ENCODE measurements at regions of chr12 and their contacts with region 1.

Region 1: GRCh38 chr12:104825408-104825807 is 132.7 kb downstream of the SLC41A2 start:
- DNase-seq: peak; percentile 25 to 69 (median 32)
- ATAC-seq: peak; percentile 82
- H3K4me3 ChIP-seq: no peak overlapping the region
- H3K27ac ChIP-seq: no peak overlapping the region
- H3K4me1 ChIP-seq: peaks cover 4 to 6% of the 10 kb centered on the region in 2 experiments; a peak in 4 of 5 replicates
- H3K27me3 ChIP-seq: no peaks in the 10 kb centered on the region
- CTCF ChIP-seq: peak; percentile 70 to 79 (median 77)
- EP300 ChIP-seq: no peak
- POLR2A ChIP-seq: no peak
- RAD21 ChIP-seq: peak; percentile 53 to 88

Region 2: DNA sequence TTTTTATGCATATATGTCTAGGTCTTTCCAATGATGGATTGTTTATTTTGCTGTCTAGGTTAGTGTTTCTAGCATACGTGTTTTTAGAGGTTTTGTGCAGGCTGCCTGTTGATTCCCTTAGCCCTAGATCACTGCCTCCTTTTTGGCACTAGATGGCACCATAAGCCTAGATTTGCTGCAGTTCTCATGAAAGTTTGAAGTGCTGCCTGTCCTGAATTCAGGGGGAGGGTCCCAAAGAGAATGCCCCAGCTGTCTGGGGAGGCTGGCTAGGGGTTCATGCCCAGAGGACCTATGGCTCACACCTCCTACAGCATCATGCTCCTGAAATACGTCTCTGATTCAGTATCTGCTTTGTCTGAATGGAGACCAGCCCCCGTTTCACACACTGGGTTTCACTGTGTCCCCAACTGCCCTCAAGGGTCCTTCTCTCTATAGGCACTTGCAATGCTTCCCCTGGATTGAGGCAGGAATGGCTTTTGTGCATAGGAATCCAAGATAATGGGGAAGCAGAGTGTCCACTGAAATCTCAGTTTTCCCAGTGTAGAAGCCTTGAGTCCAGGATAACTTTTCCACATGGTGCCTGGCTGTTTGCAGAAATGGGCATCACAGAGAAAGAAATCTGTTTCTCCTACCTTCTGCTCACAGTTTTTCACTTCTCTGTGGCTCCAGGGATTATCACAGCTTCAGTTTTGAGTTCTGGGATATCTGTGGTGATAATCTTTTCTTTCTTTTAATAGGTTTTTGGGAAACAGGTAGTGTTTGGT is 624.0 kb before region 1 on chr12:
- CTCF ChIA-PET with region 1: no interaction called
- POLR2A ChIA-PET with region 1: no interaction called
- in situ Hi-C with region 1: no loop called
- intact Hi-C with region 1: loop called (anchors 1 kb)
- DNase-seq: peak; percentile 61 to 71 (median 63)
- ATAC-seq: peak; percentile 91
- H3K4me3 ChIP-seq: no peak overlapping the region
- H3K27ac ChIP-seq: no peak overlapping the region
- H3K4me1 ChIP-seq: no peaks in the 10 kb centered on the region
- H3K27me3 ChIP-seq: peaks cover 0 to 8% of the 10 kb centered on the region in 2 experiments; a peak in 2 of 5 replicates
- CTCF ChIP-seq: peak; percentile 76 to 90 (median 88)
- EP300 ChIP-seq: no peak
- POLR2A ChIP-seq: no peak
- RAD21 ChIP-seq: peak; percentile 90 to 93

Region 3: GRCh38 chr12:104569346-104570173 is 255.8 kb before region 1 on chr12:
- CTCF ChIA-PET with region 1: no interaction called
- POLR2A ChIA-PET with region 1: no interaction called
- in situ Hi-C with region 1: no loop called
- intact Hi-C with region 1: loop called (anchors 10 kb)
- DNase-seq: no peak
- ATAC-seq: peak; percentile 42
- H3K4me3 ChIP-seq: no peak overlapping the region
- H3K27ac ChIP-seq: no peak overlapping the region
- H3K4me1 ChIP-seq: peaks cover 0 to 7% of the 10 kb centered on the region in 2 experiments; a peak in 3 of 5 replicates
- H3K27me3 ChIP-seq: no peaks in the 10 kb centered on the region
- CTCF ChIP-seq: no peak
- EP300 ChIP-seq: no peak
- POLR2A ChIP-seq: no peak
- RAD21 ChIP-seq: no peak

Region 4: GRCh38 chr12:104669736-104670341 is 155.6 kb before region 1 on chr12:
- CTCF ChIA-PET with region 1: interaction called, 3 read pairs
- POLR2A ChIA-PET with region 1: no interaction called
- in situ Hi-C with region 1: no loop called
- intact Hi-C with region 1: loop called (anchors 10 kb)
- DNase-seq: no peak
- ATAC-seq: no peak
- H3K4me3 ChIP-seq: no peak overlapping the region
- H3K27ac ChIP-seq: no peak overlapping the region
- H3K4me1 ChIP-seq: peaks cover 30 to 41% of the 10 kb centered on the region in 2 experiments; a peak in 4 of 5 replicates
- H3K27me3 ChIP-seq: no peaks in the 10 kb centered on the region
- CTCF ChIP-seq: no peak
- EP300 ChIP-seq: no peak
- POLR2A ChIP-seq: no peak
- RAD21 ChIP-seq: no peak

Region 5: DNA sequence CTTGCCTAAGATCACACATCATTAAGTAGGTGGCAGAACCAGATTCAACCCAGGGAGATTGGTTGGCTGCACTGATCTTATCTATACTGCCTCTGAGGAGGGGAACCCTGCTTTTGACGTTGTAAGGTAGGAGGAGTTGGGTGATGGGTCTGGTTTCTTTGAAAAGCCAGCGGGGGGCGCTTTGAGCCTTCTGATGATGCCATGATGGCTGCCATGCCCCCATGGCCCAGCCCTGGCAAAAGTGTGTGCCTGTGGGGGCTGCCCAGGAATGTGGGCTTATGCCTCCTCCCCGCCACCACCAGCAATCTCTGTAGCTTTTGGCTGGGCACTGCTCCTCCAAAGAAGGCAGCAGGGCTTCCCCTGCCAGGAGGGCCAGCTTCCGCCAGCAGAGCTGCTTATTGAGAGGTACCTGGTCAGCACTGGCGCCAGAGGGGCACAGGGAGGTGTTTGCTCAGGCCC is 91.7 kb before region 1 on chr12:
- CTCF ChIA-PET with region 1: no interaction called
- POLR2A ChIA-PET with region 1: no interaction called
- in situ Hi-C with region 1: no loop called
- intact Hi-C with region 1: loop called (anchors 2 kb)
- DNase-seq: peak; percentile 29 to 46 (median 36)
- ATAC-seq: peak; percentile 59
- H3K4me3 ChIP-seq: no peak overlapping the region
- H3K27ac ChIP-seq: no peak overlapping the region
- H3K4me1 ChIP-seq: peaks cover under 1 to 5% of the 10 kb centered on the region in 2 experiments; a peak in 4 of 5 replicates
- H3K27me3 ChIP-seq: no peaks in the 10 kb centered on the region
- CTCF ChIP-seq: peak in 2 of 3 experiments; percentile 45 to 50; a peak in 2 of 6 replicates
- EP300 ChIP-seq: no peak
- POLR2A ChIP-seq: no peak
- RAD21 ChIP-seq: peak; percentile 35 to 62